Calu3 (cell line): ENCODE measurements at regions of chr6 and their contacts with region 1.

Region 1: GRCh38 chr6:31776989-31777666 is at the start of gene VWA7:
- DNase-seq: peak; percentile 99
- H3K4me3 Mint-ChIP-seq: peak within 1 kb of the TSS; percentile 65
- H3K27ac Mint-ChIP-seq: peak within 1 kb of the TSS; percentile 94
- H3K4me1 Mint-ChIP-seq: peaks cover 43% of the 10 kb centered on the region
- H3K27me3 Mint-ChIP-seq: no peaks in the 10 kb centered on the region
- CTCF ChIP-seq: peak; percentile 36
- total RNA-seq, gene VWA7: 22.1 and 37.6 TPM in 2 replicates

Region 2: GRCh38 chr6:31557443-31558317 is 219.4 kb before region 1 on chr6:
- CTCF ChIA-PET with region 1: no interaction called
- intact Hi-C with region 1: no loop called
- DNase-seq: no peak
- H3K4me3 Mint-ChIP-seq: no peak overlapping the region
- H3K27ac Mint-ChIP-seq: no peak overlapping the region
- H3K4me1 Mint-ChIP-seq: peaks cover 21% of the 10 kb centered on the region
- H3K27me3 Mint-ChIP-seq: no peaks in the 10 kb centered on the region
- CTCF ChIP-seq: no peak

Region 3: DNA sequence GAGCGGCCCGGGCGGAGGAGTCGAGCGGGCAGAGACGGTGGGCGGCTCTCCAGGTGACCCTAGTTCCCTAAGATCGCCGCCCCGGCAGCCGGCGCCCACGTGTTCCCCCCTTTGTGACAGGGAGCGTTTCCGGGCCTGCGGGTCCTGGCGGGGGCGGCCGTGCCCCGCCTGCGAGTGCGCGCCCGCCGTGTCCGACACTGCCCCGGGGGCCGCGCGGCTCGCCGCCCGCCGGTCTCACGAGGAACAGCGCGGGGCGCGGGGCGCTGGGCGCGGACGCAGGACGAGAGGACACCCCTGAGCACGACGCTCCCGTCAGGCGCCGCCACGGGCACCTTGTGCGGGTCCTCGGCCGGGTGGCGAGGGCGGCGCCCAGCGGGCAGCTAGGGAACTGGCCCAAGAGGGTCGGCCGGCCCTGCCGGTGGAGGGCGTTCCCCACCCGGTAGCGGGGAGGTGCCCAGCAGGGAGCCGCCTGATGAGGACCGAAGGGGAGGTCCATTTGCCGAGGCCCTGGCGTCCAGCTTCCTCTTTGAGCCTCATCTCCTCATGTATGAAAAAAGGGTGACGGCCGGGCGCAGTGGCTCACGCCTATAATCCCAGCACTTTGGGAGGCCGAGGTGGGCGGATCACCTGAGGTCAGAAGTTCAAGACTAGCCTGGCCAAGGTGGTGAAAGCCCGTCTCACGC is 18.6 kb after region 1 on chr6 and contains the start of gene VARS1:
- CTCF ChIA-PET with region 1: interaction called, 17 read pairs
- intact Hi-C with region 1: no loop called
- DNase-seq: peak; percentile 99
- H3K4me3 Mint-ChIP-seq: peak within 1 kb of the TSS; percentile 84
- H3K27ac Mint-ChIP-seq: peak within 1 kb of the TSS; percentile 93
- H3K4me1 Mint-ChIP-seq: peaks cover 40% of the 10 kb centered on the region
- H3K27me3 Mint-ChIP-seq: no peaks in the 10 kb centered on the region
- CTCF ChIP-seq: peak; percentile 96
- total RNA-seq, gene VARS1: 316 and 331 TPM in 2 replicates

Region 4: DNA sequence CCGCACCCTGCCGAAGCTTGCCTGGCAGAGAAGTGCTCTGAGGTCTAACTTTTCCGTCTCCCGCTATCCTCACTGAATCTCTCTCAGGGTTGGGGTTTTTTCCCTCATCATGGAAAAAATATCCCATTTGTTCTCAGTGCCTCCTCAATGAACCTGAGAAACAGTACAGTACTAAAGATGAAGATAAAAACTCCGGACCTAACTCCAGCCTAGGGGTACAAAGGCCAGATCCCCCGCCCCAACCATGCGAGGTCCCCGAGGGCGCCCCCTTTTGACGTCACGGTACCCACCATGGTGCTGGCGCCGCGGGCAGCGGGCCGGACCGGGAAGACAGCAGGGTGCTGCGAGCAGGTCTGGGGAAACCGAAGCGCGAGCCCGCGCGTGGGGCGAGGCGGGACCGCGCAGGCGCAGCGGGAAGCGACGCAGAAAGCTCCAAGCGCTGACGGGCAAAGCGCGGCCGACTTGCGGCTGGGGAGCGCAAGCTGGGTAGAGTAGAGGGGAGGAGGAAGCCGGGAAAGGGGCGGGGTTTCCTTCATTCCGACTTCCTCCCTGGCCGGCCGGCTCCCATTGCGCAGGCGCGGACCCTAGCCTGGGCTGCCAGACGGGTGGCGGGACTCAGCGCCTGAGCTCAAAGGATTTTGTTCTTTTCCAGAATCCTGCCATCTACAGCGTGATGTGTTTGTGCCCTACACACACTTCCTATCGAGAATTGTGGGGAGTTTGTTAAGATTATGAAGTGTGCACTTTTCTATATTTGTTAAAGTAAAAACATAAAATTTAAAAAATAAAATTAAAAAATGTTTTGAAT is 29.5 kb after region 1 on chr6 and contains the start of gene LSM2:
- CTCF ChIA-PET with region 1: interaction called, 18 read pairs
- intact Hi-C with region 1: no loop called
- DNase-seq: peak; percentile 100
- H3K4me3 Mint-ChIP-seq: peak within 1 kb of the TSS; percentile 99
- H3K27ac Mint-ChIP-seq: peak within 1 kb of the TSS; percentile 96
- H3K4me1 Mint-ChIP-seq: peaks cover 19% of the 10 kb centered on the region
- H3K27me3 Mint-ChIP-seq: no peaks in the 10 kb centered on the region
- CTCF ChIP-seq: peak; percentile 89
- total RNA-seq, gene LSM2: 126 and 144 TPM in 2 replicates

Region 5: GRCh38 chr6:31822036-31822821 is 45.1 kb after region 1 on chr6:
- CTCF ChIA-PET with region 1: interaction called, 13 read pairs
- intact Hi-C with region 1: loop called (anchors 5 kb)
- DNase-seq: peak; percentile 93
- H3K4me3 Mint-ChIP-seq: peak overlapping the region; percentile 89
- H3K27ac Mint-ChIP-seq: peak overlapping the region; percentile 95
- H3K4me1 Mint-ChIP-seq: peaks cover 64% of the 10 kb centered on the region
- H3K27me3 Mint-ChIP-seq: peaks cover 5% of the 10 kb centered on the region
- CTCF ChIP-seq: no peak

Region 6: DNA sequence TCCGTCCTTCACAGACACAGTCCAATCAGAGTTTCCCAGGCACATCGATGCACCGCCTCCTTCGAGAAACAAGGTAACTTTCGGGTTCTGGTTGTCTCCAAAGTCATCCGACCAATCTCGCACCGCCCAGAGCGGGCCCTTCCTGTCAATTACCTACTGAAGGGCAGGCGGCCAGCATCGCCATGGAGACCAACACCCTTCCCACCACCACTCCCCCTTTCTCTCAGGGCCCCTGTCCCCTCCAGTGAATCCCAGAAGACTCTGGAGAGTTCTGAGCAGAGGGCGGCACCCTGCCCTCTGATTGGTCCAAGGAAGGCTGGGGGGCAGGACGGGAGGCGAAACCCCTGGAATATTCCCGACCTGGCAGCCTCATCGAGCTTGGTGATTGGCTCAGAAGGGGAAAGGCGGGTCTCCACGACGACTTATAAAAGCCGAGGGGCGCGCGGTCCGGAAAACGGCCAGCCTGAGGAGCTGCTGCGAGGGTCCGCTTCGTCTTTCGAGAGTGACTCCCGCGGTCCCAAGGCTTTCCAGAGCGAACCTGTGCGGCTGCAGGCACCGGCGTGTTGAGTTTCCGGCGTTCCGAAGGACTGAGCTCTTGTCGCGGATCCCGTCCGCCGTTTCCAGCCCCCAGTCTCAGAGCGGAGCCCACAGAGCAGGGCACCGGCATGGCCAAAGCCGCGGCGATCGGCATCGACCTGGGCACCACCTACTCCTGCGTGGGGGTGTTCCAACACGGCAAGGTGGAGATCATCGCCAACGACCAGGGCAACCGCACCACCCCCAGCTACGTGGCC is 50.4 kb after region 1 on chr6 and contains the start of gene HSPA1B:
- CTCF ChIA-PET with region 1: interaction called, 51 read pairs
- intact Hi-C with region 1: loop called (anchors 2 kb)
- DNase-seq: peak; percentile 100
- H3K4me3 Mint-ChIP-seq: peak within 1 kb of the TSS; percentile 80
- H3K27ac Mint-ChIP-seq: peak within 1 kb of the TSS; percentile 100
- H3K4me1 Mint-ChIP-seq: peaks cover 45% of the 10 kb centered on the region
- H3K27me3 Mint-ChIP-seq: peaks cover 13% of the 10 kb centered on the region
- CTCF ChIP-seq: no peak
- total RNA-seq, gene HSPA1B: 687 and 705 TPM in 2 replicates

Region 7: GRCh38 chr6:31862344-31863227 is 85.5 kb after region 1 on chr6 and contains the start of gene NEU1:
- CTCF ChIA-PET with region 1: interaction called, 9 read pairs
- intact Hi-C with region 1: loop called (anchors 5 kb)
- DNase-seq: peak; percentile 100
- H3K4me3 Mint-ChIP-seq: peak within 1 kb of the TSS; percentile 85
- H3K27ac Mint-ChIP-seq: peak within 1 kb of the TSS; percentile 96
- H3K4me1 Mint-ChIP-seq: peaks cover 19% of the 10 kb centered on the region
- H3K27me3 Mint-ChIP-seq: peaks cover 9% of the 10 kb centered on the region
- CTCF ChIP-seq: no peak
- total RNA-seq, gene NEU1: 133 and 159 TPM in 2 replicates

Region 8: DNA sequence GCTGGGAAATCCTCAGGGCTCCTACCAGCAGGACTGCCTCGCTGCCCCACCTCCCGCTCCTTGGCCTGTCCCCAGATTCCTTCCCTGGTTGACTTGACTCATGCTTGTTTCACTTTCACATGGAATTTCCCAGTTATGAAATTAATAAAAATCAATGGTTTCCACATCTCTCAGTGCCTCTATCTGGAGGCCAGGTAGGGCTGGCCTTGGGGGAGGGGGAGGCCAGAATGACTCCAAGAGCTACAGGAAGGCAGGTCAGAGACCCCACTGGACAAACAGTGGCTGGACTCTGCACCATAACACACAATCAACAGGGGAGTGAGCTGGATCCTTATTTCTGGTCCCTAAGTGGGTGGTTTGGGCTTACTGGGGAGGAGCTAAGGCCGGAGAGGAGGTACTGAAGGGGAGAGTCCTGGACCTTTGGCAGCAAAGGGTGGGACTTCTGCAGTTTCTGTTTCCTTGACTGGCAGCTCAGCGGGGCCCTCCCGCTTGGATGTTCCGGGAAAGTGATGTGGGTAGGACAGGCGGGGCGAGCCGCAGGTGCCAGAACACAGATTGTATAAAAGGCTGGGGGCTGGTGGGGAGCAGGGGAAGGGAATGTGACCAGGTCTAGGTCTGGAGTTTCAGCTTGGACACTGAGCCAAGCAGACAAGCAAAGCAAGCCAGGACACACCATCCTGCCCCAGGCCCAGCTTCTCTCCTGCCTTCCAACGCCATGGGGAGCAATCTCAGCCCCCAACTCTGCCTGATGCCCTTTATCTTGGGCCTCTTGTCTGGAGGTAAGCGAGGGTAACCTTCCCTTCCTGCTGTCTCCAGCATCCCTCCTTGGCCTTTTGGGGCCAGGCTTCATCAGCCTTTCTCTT is 168.6 kb after region 1 on chr6 and contains the start of gene CFB:
- CTCF ChIA-PET with region 1: interaction called, 3 read pairs
- intact Hi-C with region 1: loop called (anchors 10 kb)
- DNase-seq: peak; percentile 98
- H3K4me3 Mint-ChIP-seq: peak within 1 kb of the TSS; percentile 77
- H3K27ac Mint-ChIP-seq: peak within 1 kb of the TSS; percentile 84
- H3K4me1 Mint-ChIP-seq: peaks cover 84% of the 10 kb centered on the region
- H3K27me3 Mint-ChIP-seq: no peaks in the 10 kb centered on the region
- CTCF ChIP-seq: no peak
- total RNA-seq, gene CFB: 944 and 1,205 TPM in 2 replicates